CD4-positive, alpha-beta memory T cell (primary cell): ENCODE measurements at regions of chr18 and their contacts with region 1.

Region 1: GRCh38 chr18:69935319-69936190 is 12.1 kb downstream of the CD226 start:
- DNase-seq: peak; percentile 86 to 95 (median 89)
- H3K4me3 ChIP-seq: peak overlapping the region in 1 of 2 donors; percentile 25
- H3K4me3 Mint-ChIP-seq: peak overlapping the region in 1 of 8 donors; percentile 45
- H3K27ac ChIP-seq: peak overlapping the region; percentile 42
- H3K27ac Mint-ChIP-seq: no peak overlapping the region
- H3K4me1 ChIP-seq: peaks cover 90% of the 10 kb centered on the region
- H3K4me1 Mint-ChIP-seq: peaks cover under 1 to 45% (median 20%) of the 10 kb centered on the region in 4 donors
- H3K27me3 ChIP-seq: no peaks in the 10 kb centered on the region
- H3K27me3 Mint-ChIP-seq: peaks cover 0 to 2% of the 10 kb centered on the region in 2 donors

Region 2: GRCh38 chr18:69908838-69909237 is 26.7 kb before region 1 on chr18:
- CTCF ChIA-PET with region 1: interaction called, 3 read pairs
- POLR2A ChIA-PET with region 1: interaction called, 17 read pairs
- intact Hi-C with region 1: no loop called
- DNase-seq: no peak
- H3K4me3 ChIP-seq: no peak overlapping the region
- H3K4me3 Mint-ChIP-seq: peak overlapping the region in 5 of 8 donors; percentile 29 to 85 (median 47)
- H3K27ac ChIP-seq: no peak overlapping the region
- H3K27ac Mint-ChIP-seq: peak overlapping the region; percentile 45 to 86 (median 80)
- H3K4me1 ChIP-seq: peaks cover 68% of the 10 kb centered on the region
- H3K4me1 Mint-ChIP-seq: peaks cover 52 to 82% (median 70%) of the 10 kb centered on the region in 4 donors
- H3K27me3 ChIP-seq: no peaks in the 10 kb centered on the region
- H3K27me3 Mint-ChIP-seq: no peaks in the 10 kb centered on the region

Region 3: GRCh38 chr18:69916412-69916811 is 19.1 kb before region 1 on chr18:
- CTCF ChIA-PET with region 1: no interaction called
- POLR2A ChIA-PET with region 1: interaction called, 10 read pairs
- intact Hi-C with region 1: loop called (anchors 2 kb)
- DNase-seq: no peak
- H3K4me3 ChIP-seq: no peak overlapping the region
- H3K4me3 Mint-ChIP-seq: peak overlapping the region in 2 of 8 donors; percentile 9 to 42
- H3K27ac ChIP-seq: no peak overlapping the region
- H3K27ac Mint-ChIP-seq: peak overlapping the region in 6 of 7 donors; percentile 16 to 69 (median 46)
- H3K4me1 ChIP-seq: peaks cover 63% of the 10 kb centered on the region
- H3K4me1 Mint-ChIP-seq: peaks cover 55 to 91% (median 73%) of the 10 kb centered on the region in 4 donors
- H3K27me3 ChIP-seq: no peaks in the 10 kb centered on the region
- H3K27me3 Mint-ChIP-seq: no peaks in the 10 kb centered on the region

Region 4: GRCh38 chr18:69947361-69948133 is 12.0 kb after region 1 on chr18 and contains the start of gene CD226:
- CTCF ChIA-PET with region 1: interaction called, 34 read pairs
- POLR2A ChIA-PET with region 1: interaction called, 240 read pairs
- intact Hi-C with region 1: loop called (anchors 1 kb)
- DNase-seq: peak; percentile 61 to 68 (median 64)
- H3K4me3 ChIP-seq: peak within 1 kb of the TSS; percentile 63 to 71
- H3K4me3 Mint-ChIP-seq: peak within 1 kb of the TSS in 2 of 8 donors; percentile 86 to 91
- H3K27ac ChIP-seq: peak within 1 kb of the TSS; percentile 60
- H3K27ac Mint-ChIP-seq: no peak within 1 kb of the TSS
- H3K4me1 ChIP-seq: peaks cover 98% of the 10 kb centered on the region
- H3K4me1 Mint-ChIP-seq: peaks cover 9 to 45% (median 28%) of the 10 kb centered on the region in 4 donors
- H3K27me3 ChIP-seq: no peaks in the 10 kb centered on the region
- H3K27me3 Mint-ChIP-seq: no peaks in the 10 kb centered on the region
- total RNA-seq, gene CD226: 94.6 to 95.7 TPM